MCF 10A (cell line): ENCODE measurements at regions of chr3 and their contacts with region 1.

Region 1: GRCh38 chr3:155362808-155363689 is 69.6 kb upstream of the STRIT1 start:
- DNase-seq: no peak
- H3K4me3 Mint-ChIP-seq: no peak overlapping the region
- H3K27ac Mint-ChIP-seq: no peak overlapping the region
- H3K4me1 Mint-ChIP-seq: no peaks in the 10 kb centered on the region
- H3K27me3 Mint-ChIP-seq: no peaks in the 10 kb centered on the region
- CTCF ChIP-seq: no peak

Region 2: GRCh38 chr3:154584974-154585373 is 778.1 kb before region 1 on chr3:
- CTCF ChIA-PET with region 1: no interaction called
- POLR2A ChIA-PET with region 1: no interaction called
- intact Hi-C with region 1: no loop called
- DNase-seq: no peak
- H3K4me3 Mint-ChIP-seq: no peak overlapping the region
- H3K27ac Mint-ChIP-seq: no peak overlapping the region
- H3K4me1 Mint-ChIP-seq: no peaks in the 10 kb centered on the region
- H3K27me3 Mint-ChIP-seq: peaks cover 7% of the 10 kb centered on the region
- CTCF ChIP-seq: no peak

Region 3: DNA sequence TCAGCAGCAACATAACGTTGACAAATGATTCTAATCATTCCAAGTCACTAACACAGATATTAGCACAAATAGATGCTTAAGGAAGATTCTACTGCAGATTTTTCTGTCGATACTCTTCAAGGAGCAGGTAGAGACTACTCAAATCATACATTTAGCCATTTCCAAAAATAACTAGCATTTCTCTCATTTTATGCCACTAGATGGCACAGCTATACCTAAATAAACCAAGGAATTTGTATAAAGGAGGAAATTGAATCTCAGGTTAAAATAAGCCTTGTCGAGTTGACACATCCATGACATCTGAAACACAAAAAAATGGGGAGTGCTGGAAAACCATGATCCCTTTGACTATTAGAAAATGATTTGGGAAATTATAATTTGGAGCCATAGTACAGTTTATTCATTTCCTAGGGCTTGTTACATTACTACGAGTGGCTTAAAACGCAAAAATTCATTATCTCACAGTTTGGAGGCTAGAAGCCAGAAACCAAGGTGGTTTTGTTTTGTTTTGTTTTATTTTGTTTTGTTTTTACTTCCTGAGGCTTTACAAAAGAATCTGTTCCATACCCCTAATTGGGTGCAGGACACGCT is 10.1 kb before region 1 on chr3:
- CTCF ChIA-PET with region 1: interaction called, 10 read pairs
- POLR2A ChIA-PET with region 1: no interaction called
- intact Hi-C with region 1: no loop called
- DNase-seq: peak; percentile 50
- H3K4me3 Mint-ChIP-seq: no peak overlapping the region
- H3K27ac Mint-ChIP-seq: no peak overlapping the region
- H3K4me1 Mint-ChIP-seq: peaks cover 4% of the 10 kb centered on the region
- H3K27me3 Mint-ChIP-seq: no peaks in the 10 kb centered on the region
- CTCF ChIP-seq: peak; percentile 51